ENCODE measurements at regions of chr10 and their contacts with region 1.

Region 1: GRCh38 chr10:84537447-84537931 is 209.1 kb downstream of the CCSER2 start:
- DNase-seq: peak in 7 of 9 donors; percentile 33 to 62 (median 55)
- ATAC-seq: peak; percentile 82
- H3K4me3 ChIP-seq: no peak overlapping the region
- H3K4me3 Mint-ChIP-seq: peak overlapping the region in 1 of 10 donors; percentile 31
- H3K27ac ChIP-seq: no peak overlapping the region
- H3K27ac Mint-ChIP-seq: peak overlapping the region in 1 of 9 donors; percentile 39
- H3K4me1 ChIP-seq: peaks cover 4 to 7% of the 10 kb centered on the region in 2 donors
- H3K4me1 Mint-ChIP-seq: peaks cover 9 to 23% (median 13%) of the 10 kb centered on the region in 7 donors
- H3K27me3 ChIP-seq: peaks cover 0 to 3% of the 10 kb centered on the region in 2 donors
- H3K27me3 Mint-ChIP-seq: peaks cover 15 to 22% (median 17%) of the 10 kb centered on the region in 5 donors

Region 2: DNA sequence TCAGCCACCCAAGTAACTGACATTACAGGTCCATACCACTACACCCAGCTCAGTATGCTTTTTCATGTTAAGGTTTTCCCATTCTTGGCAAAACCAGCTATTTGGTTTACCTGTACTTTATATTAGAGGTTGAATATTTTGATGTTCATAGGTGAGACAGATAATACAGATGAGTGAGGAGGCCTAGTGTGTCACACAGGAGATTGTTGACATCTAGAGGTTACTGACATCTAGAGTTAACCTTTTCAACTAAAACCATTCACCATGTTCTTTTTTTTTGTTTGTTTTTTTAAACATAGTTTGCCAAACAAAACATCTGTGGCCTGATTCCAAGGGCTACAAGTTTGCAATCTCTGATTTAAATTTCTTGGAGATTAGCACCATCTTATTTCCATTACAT is 390.1 kb before region 1 on chr10:
- CTCF ChIA-PET with region 1: interaction called, 3 read pairs
- POLR2A ChIA-PET with region 1: no interaction called
- intact Hi-C with region 1: loop called in 1 of 2 experiments (anchors 5 kb)
- DNase-seq: no peak
- ATAC-seq: no peak
- H3K4me3 ChIP-seq: no peak overlapping the region
- H3K4me3 Mint-ChIP-seq: no peak overlapping the region
- H3K27ac ChIP-seq: peak overlapping the region; percentile 40
- H3K27ac Mint-ChIP-seq: peak overlapping the region in 4 of 9 donors; percentile 2 to 63 (median 52)
- H3K4me1 ChIP-seq: no peaks in the 10 kb centered on the region
- H3K4me1 Mint-ChIP-seq: peaks cover 0 to 36% (median 26%) of the 10 kb centered on the region in 7 donors
- H3K27me3 ChIP-seq: no peaks in the 10 kb centered on the region
- H3K27me3 Mint-ChIP-seq: no peaks in the 10 kb centered on the region

Region 3: DNA sequence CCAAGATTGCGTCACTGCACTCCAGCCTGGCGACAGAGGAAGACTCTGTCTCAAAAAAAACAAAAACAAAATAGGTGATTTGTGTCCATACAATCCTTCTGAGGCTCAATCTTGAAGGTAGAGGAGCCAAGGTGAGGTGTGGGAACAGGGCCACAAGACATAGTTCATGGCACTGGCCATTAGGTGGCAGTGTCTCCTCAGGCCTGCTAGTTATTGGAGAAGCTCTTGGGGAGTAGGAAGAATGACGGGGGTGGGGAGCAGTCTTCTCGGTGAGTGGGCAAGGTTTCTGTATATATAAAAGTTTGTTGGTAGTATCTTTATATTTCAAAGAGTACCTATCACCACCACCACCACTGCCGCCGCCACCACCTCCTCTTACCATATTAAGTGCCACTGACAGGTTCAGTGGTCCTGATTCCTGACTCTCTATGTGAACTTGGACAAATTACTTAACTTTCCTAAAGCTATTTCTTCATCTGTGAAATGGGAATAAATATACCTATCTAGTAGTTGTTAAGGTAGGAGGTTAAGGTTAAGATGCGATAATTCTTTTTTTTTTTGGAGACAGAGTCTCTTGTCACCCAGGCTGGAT is 185.1 kb before region 1 on chr10:
- CTCF ChIA-PET with region 1: interaction called, 10 read pairs
- POLR2A ChIA-PET with region 1: no interaction called
- intact Hi-C with region 1: loop called (anchors 1 kb)
- DNase-seq: peak; percentile 33 to 68 (median 55)
- ATAC-seq: peak; percentile 94
- H3K4me3 ChIP-seq: no peak overlapping the region
- H3K4me3 Mint-ChIP-seq: peak overlapping the region in 3 of 10 donors; percentile 18 to 56 (median 35)
- H3K27ac ChIP-seq: no peak overlapping the region
- H3K27ac Mint-ChIP-seq: no peak overlapping the region
- H3K4me1 ChIP-seq: peaks cover 30 to 46% of the 10 kb centered on the region in 2 donors
- H3K4me1 Mint-ChIP-seq: peaks cover 47 to 87% (median 80%) of the 10 kb centered on the region in 7 donors
- H3K27me3 ChIP-seq: no peaks in the 10 kb centered on the region
- H3K27me3 Mint-ChIP-seq: no peaks in the 10 kb centered on the region

Region 4: DNA sequence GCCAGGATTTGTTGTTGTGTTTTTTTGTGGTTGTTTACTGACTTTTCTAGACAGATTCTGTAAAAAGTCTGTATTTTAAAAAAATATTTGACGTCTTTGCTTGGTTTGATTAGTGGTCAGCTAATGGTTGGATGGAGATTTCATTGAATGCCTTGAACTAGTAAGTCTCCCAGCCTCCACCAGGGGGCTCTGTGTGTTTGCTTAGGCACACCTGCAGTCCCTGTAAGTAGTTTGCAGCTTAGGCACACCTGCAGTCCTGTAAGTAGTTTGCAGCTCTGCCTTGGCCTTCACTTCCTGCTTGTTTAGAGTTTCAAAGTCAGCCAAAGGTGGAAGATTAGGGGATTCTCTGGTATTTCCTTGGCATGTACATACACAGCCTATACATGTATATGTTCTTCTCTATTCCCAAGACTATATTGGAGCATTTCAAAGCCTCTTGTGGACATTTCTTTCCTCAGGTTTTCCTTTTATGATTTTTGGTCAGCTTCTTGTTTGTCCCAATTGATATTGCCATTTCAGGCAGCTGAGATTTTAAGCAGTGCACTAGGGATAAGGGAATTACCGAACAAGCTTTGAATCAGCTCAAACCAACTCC is 107.5 kb before region 1 on chr10:
- CTCF ChIA-PET with region 1: interaction called, 12 read pairs
- POLR2A ChIA-PET with region 1: no interaction called
- intact Hi-C with region 1: loop called (anchors 1 kb)
- DNase-seq: peak; percentile 23 to 55 (median 45)
- ATAC-seq: peak; percentile 84
- H3K4me3 ChIP-seq: no peak overlapping the region
- H3K4me3 Mint-ChIP-seq: peak overlapping the region in 3 of 10 donors; percentile 10 to 18 (median 14)
- H3K27ac ChIP-seq: no peak overlapping the region
- H3K27ac Mint-ChIP-seq: peak overlapping the region in 1 of 9 donors; percentile 24
- H3K4me1 ChIP-seq: peaks cover 1 to 9% of the 10 kb centered on the region in 2 donors
- H3K4me1 Mint-ChIP-seq: peaks cover 25 to 70% (median 59%) of the 10 kb centered on the region in 7 donors
- H3K27me3 ChIP-seq: no peaks in the 10 kb centered on the region
- H3K27me3 Mint-ChIP-seq: no peaks in the 10 kb centered on the region

Region 5: GRCh38 chr10:84715911-84716310 is 178.4 kb after region 1 on chr10:
- CTCF ChIA-PET with region 1: no interaction called
- POLR2A ChIA-PET with region 1: no interaction called
- intact Hi-C with region 1: loop called in 1 of 2 experiments (anchors 1 kb)
- DNase-seq: no peak
- ATAC-seq: no peak
- H3K4me3 ChIP-seq: no peak overlapping the region
- H3K4me3 Mint-ChIP-seq: no peak overlapping the region
- H3K27ac ChIP-seq: no peak overlapping the region
- H3K27ac Mint-ChIP-seq: no peak overlapping the region
- H3K4me1 ChIP-seq: no peaks in the 10 kb centered on the region
- H3K4me1 Mint-ChIP-seq: no peaks in the 10 kb centered on the region
- H3K27me3 ChIP-seq: no peaks in the 10 kb centered on the region
- H3K27me3 Mint-ChIP-seq: peaks cover 4 to 32% (median 11%) of the 10 kb centered on the region in 5 donors

Region 6: GRCh38 chr10:86376852-86377796 is 1839.6 kb after region 1 on chr10:
- CTCF ChIA-PET with region 1: interaction called, 17 read pairs
- POLR2A ChIA-PET with region 1: no interaction called
- intact Hi-C with region 1: loop called (anchors 1 to 2 kb)
- DNase-seq: peak; percentile 52 to 92 (median 78)
- ATAC-seq: peak; percentile 98
- H3K4me3 ChIP-seq: no peak overlapping the region
- H3K4me3 Mint-ChIP-seq: peak overlapping the region in 5 of 10 donors; percentile 23 to 60 (median 32)
- H3K27ac ChIP-seq: no peak overlapping the region
- H3K27ac Mint-ChIP-seq: peak overlapping the region in 1 of 9 donors; percentile 41
- H3K4me1 ChIP-seq: no peaks in the 10 kb centered on the region
- H3K4me1 Mint-ChIP-seq: peaks cover 0 to 4% (median 0%) of the 10 kb centered on the region in 7 donors
- H3K27me3 ChIP-seq: peaks cover 0 to 5% of the 10 kb centered on the region in 2 donors
- H3K27me3 Mint-ChIP-seq: peaks cover 14 to 54% (median 39%) of the 10 kb centered on the region in 5 donors